IMR-90 (cell line): ENCODE measurements at regions of chr3 and their contacts with region 1.

Region 1: DNA sequence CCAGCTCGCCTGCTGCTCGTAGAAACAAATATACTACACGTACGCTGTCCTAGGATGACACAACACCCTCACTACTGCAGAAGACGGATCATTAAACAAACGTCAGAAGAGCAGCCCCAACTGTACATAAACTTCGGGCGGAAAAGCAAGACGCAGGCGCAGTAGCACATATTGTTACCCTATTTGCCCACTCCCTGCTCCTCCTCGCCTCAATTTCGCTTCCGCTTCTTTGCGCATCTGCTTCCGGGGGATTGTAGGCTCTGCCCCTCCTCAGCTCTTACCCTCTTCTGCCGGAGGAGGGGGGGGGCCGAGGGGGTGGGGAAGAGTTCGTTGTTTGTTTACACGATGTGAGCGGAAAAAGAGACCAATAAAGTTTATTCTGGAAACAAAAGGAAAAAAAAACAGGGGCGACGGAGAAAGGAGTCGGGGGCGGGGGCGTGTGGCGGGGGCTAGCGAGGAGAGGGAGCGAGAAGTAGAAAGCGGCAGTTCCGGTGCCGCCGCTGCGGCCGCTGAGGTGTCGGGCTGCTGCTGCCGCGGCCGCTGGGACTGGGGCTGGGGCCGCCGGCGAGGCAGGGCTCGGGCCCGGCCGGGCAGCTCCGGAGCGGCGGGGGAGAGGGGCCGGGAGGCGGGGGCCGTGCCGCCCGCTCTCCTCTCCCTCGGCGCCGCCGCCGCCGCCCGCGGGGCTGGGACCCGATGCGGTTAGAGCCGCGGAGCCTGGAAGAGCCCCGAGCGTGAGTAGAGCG is at the start of gene PIK3CA:
- DNase-seq: peak; percentile 99
- ATAC-seq: peak; percentile 86
- H3K4me3 ChIP-seq: peak within 1 kb of the TSS; percentile 94
- H3K27ac ChIP-seq: peak within 1 kb of the TSS; percentile 94
- H3K4me1 ChIP-seq: peaks cover 3% of the 10 kb centered on the region
- H3K27me3 ChIP-seq: no peaks in the 10 kb centered on the region
- CTCF ChIP-seq: no peak
- POLR2A ChIP-seq: peak; percentile 73; the same call in 1 of the 2 replicates
- RAD21 ChIP-seq: no peak
- total RNA-seq, gene PIK3CA: 22.4 and 28.6 TPM in 2 replicates

Region 2: GRCh38 chr3:179015551-179016020 is 132.5 kb before region 1 on chr3:
- CTCF ChIA-PET with region 1: no interaction called
- POLR2A ChIA-PET with region 1: no interaction called
- dilution Hi-C with region 1: no loop called
- in situ Hi-C with region 1: no loop called
- intact Hi-C with region 1: loop called (anchors 1 kb)
- DNase-seq: peak; percentile 83
- ATAC-seq: peak; percentile 93
- H3K4me3 ChIP-seq: no peak overlapping the region
- H3K27ac ChIP-seq: no peak overlapping the region
- H3K4me1 ChIP-seq: peaks cover 3% of the 10 kb centered on the region
- H3K27me3 ChIP-seq: no peaks in the 10 kb centered on the region
- CTCF ChIP-seq: peak; percentile 89
- POLR2A ChIP-seq: no peak
- RAD21 ChIP-seq: peak; percentile 83

Region 3: GRCh38 chr3:179071550-179072397 is 76.3 kb before region 1 on chr3 and contains the start of gene ZMAT3:
- CTCF ChIA-PET with region 1: no interaction called
- POLR2A ChIA-PET with region 1: no interaction called
- dilution Hi-C with region 1: no loop called
- in situ Hi-C with region 1: no loop called
- intact Hi-C with region 1: loop called (anchors 1 kb)
- DNase-seq: peak; percentile 82
- ATAC-seq: peak; percentile 95
- H3K4me3 ChIP-seq: peak within 1 kb of the TSS; percentile 90
- H3K27ac ChIP-seq: peak within 1 kb of the TSS; percentile 96
- H3K4me1 ChIP-seq: peaks cover 9% of the 10 kb centered on the region
- H3K27me3 ChIP-seq: no peaks in the 10 kb centered on the region
- CTCF ChIP-seq: no peak
- POLR2A ChIP-seq: peak; percentile 75
- RAD21 ChIP-seq: peak; percentile 8; the same call in 1 of the 2 replicates
- total RNA-seq, gene ZMAT3: 11.7 and 21.7 TPM in 2 replicates

Region 4: DNA sequence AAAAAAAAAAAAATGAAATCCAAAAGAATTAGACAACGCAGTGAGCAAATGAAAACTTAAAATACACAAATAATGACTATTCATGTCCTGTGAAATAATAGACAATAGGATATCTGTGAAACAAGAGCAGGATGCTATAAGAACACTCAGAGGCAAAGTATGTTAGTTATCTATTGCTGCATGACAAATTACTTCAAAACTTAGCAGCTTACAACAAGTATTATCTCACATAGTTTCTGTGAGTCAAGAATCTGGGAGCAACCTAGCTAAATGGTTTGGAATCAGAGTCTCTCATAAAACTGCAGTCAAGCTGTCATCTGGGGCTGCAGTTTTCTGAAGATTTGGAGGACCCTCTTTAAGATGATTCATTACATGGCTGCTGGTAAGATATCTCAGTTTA is 40.0 kb before region 1 on chr3:
- CTCF ChIA-PET with region 1: no interaction called
- POLR2A ChIA-PET with region 1: no interaction called
- dilution Hi-C with region 1: no loop called
- in situ Hi-C with region 1: no loop called
- intact Hi-C with region 1: loop called (anchors 5 kb)
- DNase-seq: peak; percentile 87
- ATAC-seq: peak; percentile 91
- H3K4me3 ChIP-seq: no peak overlapping the region
- H3K27ac ChIP-seq: peak overlapping the region; percentile 17; the same call in 1 of the 2 replicates
- H3K4me1 ChIP-seq: peaks cover 4% of the 10 kb centered on the region
- H3K27me3 ChIP-seq: no peaks in the 10 kb centered on the region
- CTCF ChIP-seq: no peak
- POLR2A ChIP-seq: no peak
- RAD21 ChIP-seq: no peak

Region 5: GRCh38 chr3:179196098-179196497 is 48.1 kb after region 1 on chr3:
- CTCF ChIA-PET with region 1: interaction called, 3 read pairs
- POLR2A ChIA-PET with region 1: interaction called, 3 read pairs
- dilution Hi-C with region 1: no loop called
- in situ Hi-C with region 1: no loop called
- intact Hi-C with region 1: loop called (anchors 5 kb)
- DNase-seq: peak; percentile 89
- ATAC-seq: peak; percentile 84
- H3K4me3 ChIP-seq: no peak overlapping the region
- H3K27ac ChIP-seq: no peak overlapping the region
- H3K4me1 ChIP-seq: peaks cover 5% of the 10 kb centered on the region
- H3K27me3 ChIP-seq: no peaks in the 10 kb centered on the region
- CTCF ChIP-seq: no peak
- POLR2A ChIP-seq: no peak
- RAD21 ChIP-seq: no peak

Region 6: DNA sequence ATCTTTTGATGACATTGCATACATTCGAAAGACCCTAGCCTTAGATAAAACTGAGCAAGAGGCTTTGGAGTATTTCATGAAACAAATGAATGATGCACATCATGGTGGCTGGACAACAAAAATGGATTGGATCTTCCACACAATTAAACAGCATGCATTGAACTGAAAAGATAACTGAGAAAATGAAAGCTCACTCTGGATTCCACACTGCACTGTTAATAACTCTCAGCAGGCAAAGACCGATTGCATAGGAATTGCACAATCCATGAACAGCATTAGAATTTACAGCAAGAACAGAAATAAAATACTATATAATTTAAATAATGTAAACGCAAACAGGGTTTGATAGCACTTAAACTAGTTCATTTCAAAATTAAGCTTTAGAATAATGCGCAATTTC is 86.2 kb after region 1 on chr3:
- CTCF ChIA-PET with region 1: no interaction called
- POLR2A ChIA-PET with region 1: interaction called, 10 read pairs
- dilution Hi-C with region 1: no loop called
- in situ Hi-C with region 1: no loop called
- intact Hi-C with region 1: no loop called
- DNase-seq: peak; percentile 15
- ATAC-seq: peak; percentile 48; the same call in 1 of the 2 replicates
- H3K4me3 ChIP-seq: no peak overlapping the region
- H3K27ac ChIP-seq: no peak overlapping the region
- H3K4me1 ChIP-seq: no peaks in the 10 kb centered on the region
- H3K27me3 ChIP-seq: no peaks in the 10 kb centered on the region
- CTCF ChIP-seq: no peak
- POLR2A ChIP-seq: no peak
- RAD21 ChIP-seq: no peak

Region 7: GRCh38 chr3:179322286-179323196 is 174.5 kb after region 1 on chr3 and contains the start of gene ZNF639:
- CTCF ChIA-PET with region 1: interaction called, 3 read pairs
- POLR2A ChIA-PET with region 1: no interaction called
- dilution Hi-C with region 1: no loop called
- in situ Hi-C with region 1: loop called (anchors 5 kb)
- intact Hi-C with region 1: loop called (anchors 1 kb)
- DNase-seq: peak; percentile 82
- ATAC-seq: peak; percentile 90
- H3K4me3 ChIP-seq: peak within 1 kb of the TSS; percentile 97
- H3K27ac ChIP-seq: peak within 1 kb of the TSS; percentile 94
- H3K4me1 ChIP-seq: peaks cover 3% of the 10 kb centered on the region; the same call in 1 of the 2 replicates
- H3K27me3 ChIP-seq: no peaks in the 10 kb centered on the region
- CTCF ChIP-seq: peak; percentile 90
- POLR2A ChIP-seq: peak; percentile 77
- RAD21 ChIP-seq: peak; percentile 38; the same call in 1 of the 2 replicates
- total RNA-seq, gene ZNF639: 50.5 and 57.8 TPM in 2 replicates